Calu3 (cell line): ENCODE measurements at regions of chr6 and their contacts with region 1.

Region 1: DNA sequence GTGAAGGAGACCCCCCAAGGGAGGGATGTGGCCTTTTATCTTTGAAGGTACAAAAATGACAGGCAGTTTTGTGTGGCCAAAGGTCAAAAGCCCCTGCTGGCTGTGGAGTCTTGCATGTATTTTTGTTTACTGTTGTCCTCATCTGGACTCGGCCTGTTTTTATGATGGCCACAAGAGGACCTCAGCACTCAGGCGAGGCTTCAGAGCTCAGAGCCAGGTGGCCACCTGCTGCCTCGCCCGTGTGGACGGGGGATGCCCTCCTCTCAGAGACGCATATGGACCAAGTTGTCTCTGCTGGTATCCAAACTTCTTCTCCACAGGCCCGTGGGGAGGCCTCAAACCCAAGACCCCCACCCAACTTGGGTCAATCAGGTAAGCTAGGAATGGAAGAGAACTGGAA is 118.2 kb downstream of the DACT2 start:
- DNase-seq: peak; percentile 30
- H3K4me3 Mint-ChIP-seq: no peak overlapping the region
- H3K27ac Mint-ChIP-seq: no peak overlapping the region
- H3K4me1 Mint-ChIP-seq: peaks cover 9% of the 10 kb centered on the region
- H3K27me3 Mint-ChIP-seq: peaks cover 67% of the 10 kb centered on the region
- CTCF ChIP-seq: peak; percentile 42

Region 2: GRCh38 chr6:168264593-168265335 is 63.4 kb after region 1 on chr6:
- CTCF ChIA-PET with region 1: no interaction called
- intact Hi-C with region 1: loop called (anchors 5 kb)
- DNase-seq: no peak
- H3K4me3 Mint-ChIP-seq: no peak overlapping the region
- H3K27ac Mint-ChIP-seq: no peak overlapping the region
- H3K4me1 Mint-ChIP-seq: peaks cover 26% of the 10 kb centered on the region
- H3K27me3 Mint-ChIP-seq: peaks cover 52% of the 10 kb centered on the region
- CTCF ChIP-seq: no peak

Region 3: DNA sequence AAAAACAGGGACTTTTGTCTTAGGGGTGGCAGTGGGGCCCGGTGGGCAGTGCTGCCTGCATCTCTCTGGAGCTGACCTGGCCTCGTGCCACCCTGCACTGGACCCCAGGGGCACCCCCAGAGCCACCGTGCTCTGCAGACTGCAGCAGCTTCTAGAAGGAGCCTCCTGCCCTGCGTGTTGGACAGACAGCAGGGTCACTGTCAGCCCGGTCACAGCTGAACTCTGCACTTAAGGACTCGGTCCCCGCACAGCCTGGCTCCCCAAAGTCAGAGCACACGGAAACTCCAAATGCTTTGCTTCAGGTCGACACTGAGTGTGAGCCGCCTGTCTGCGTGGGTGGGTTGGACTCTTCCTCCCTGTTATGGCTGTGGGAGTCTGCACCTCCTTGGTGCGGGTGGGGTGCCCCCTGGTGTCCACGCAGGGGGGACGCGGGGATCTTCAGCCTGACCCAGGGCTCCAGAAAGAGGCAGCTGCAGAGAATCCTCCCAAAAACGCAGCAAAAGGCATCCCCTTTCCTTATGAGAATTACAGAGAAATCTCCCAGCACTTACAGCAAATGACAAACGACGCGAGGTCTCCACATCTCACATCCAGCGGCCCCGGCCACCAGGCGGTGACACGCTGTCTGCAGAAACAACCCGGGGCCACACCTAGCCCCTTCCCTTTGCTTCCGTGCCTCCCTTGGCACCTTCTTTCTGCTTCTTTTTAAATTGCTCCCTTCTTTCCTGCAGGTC is 154.5 kb after region 1 on chr6:
- CTCF ChIA-PET with region 1: interaction called, 6 read pairs
- intact Hi-C with region 1: loop called (anchors 2 kb)
- DNase-seq: peak; percentile 77
- H3K4me3 Mint-ChIP-seq: no peak overlapping the region
- H3K27ac Mint-ChIP-seq: no peak overlapping the region
- H3K4me1 Mint-ChIP-seq: no peaks in the 10 kb centered on the region
- H3K27me3 Mint-ChIP-seq: peaks cover 42% of the 10 kb centered on the region
- CTCF ChIP-seq: peak; percentile 89